MCF 10A (cell line): ENCODE measurements at regions of chr4 and their contacts with region 1.

Region 1: DNA sequence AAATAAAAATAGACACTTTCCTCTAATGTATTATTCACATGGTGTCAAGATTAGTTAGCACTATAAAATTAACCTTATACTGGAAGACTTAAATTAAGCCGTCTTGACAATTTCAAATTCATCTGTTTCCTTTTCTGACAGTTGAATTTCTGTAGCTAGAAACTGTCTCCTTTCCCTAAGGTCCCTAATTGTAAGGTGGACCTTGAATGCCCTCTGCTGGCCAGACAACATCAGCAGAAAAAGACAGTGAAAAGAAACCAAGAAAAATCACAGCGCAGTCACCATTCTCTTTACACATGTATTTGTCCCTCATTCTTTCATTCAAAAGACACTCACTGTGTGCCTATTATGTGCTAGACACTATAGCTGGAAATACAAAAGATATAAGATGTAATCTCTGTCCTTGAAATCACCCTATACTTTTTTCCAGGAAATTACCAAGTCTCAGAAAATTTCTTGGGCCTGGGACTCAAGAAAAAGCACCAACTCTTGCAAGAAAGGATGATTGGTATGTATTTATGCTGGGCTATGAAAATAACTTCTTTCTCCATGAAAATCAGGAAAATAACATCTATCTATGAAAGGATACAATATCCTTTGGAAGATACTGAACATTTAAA is 32.7 kb upstream of the AMBN start:
- DNase-seq: peak; percentile 74
- H3K4me3 Mint-ChIP-seq: no peak overlapping the region
- H3K27ac Mint-ChIP-seq: no peak overlapping the region
- H3K4me1 Mint-ChIP-seq: peaks cover 9% of the 10 kb centered on the region
- H3K27me3 Mint-ChIP-seq: no peaks in the 10 kb centered on the region
- CTCF ChIP-seq: peak; percentile 79

Region 2: DNA sequence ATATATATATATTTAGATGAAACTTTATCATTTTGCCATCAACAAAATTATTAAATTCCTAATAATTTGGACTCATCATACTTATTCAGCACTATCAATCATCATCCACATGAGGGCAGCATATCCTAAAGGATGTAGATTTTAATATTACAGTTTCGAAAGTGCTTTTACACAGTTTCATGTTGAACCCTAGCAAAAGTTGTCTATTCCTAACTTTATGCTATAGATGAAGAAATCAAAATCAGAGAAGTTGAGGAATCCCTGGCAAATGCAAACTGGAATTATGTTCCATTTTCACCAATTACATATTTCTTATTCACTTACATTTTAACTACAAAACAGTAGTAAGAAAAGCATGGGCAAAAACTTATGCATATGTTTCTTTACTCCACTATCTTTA is 869.7 kb before region 1 on chr4:
- CTCF ChIA-PET with region 1: interaction called, 3 read pairs
- POLR2A ChIA-PET with region 1: no interaction called
- intact Hi-C with region 1: loop called (anchors 2 kb)
- DNase-seq: peak; percentile 65
- H3K4me3 Mint-ChIP-seq: no peak overlapping the region
- H3K27ac Mint-ChIP-seq: no peak overlapping the region
- H3K4me1 Mint-ChIP-seq: no peaks in the 10 kb centered on the region
- H3K27me3 Mint-ChIP-seq: no peaks in the 10 kb centered on the region
- CTCF ChIP-seq: peak; percentile 45

Region 3: GRCh38 chr4:69896530-69897116 is 662.7 kb before region 1 on chr4:
- CTCF ChIA-PET with region 1: interaction called, 15 read pairs
- POLR2A ChIA-PET with region 1: no interaction called
- intact Hi-C with region 1: loop called (anchors 2 kb)
- DNase-seq: peak; percentile 27
- H3K4me3 Mint-ChIP-seq: no peak overlapping the region
- H3K27ac Mint-ChIP-seq: no peak overlapping the region
- H3K4me1 Mint-ChIP-seq: no peaks in the 10 kb centered on the region
- H3K27me3 Mint-ChIP-seq: peaks cover 79% of the 10 kb centered on the region
- CTCF ChIP-seq: peak; percentile 58

Region 4: GRCh38 chr4:69991016-69991415 is 568.3 kb before region 1 on chr4:
- CTCF ChIA-PET with region 1: no interaction called
- POLR2A ChIA-PET with region 1: no interaction called
- intact Hi-C with region 1: no loop called
- DNase-seq: no peak
- H3K4me3 Mint-ChIP-seq: no peak overlapping the region
- H3K27ac Mint-ChIP-seq: no peak overlapping the region
- H3K4me1 Mint-ChIP-seq: no peaks in the 10 kb centered on the region
- H3K27me3 Mint-ChIP-seq: peaks cover 43% of the 10 kb centered on the region
- CTCF ChIP-seq: no peak

Region 5: GRCh38 chr4:70183168-70183939 is 376.0 kb before region 1 on chr4:
- CTCF ChIA-PET with region 1: interaction called, 10 read pairs
- POLR2A ChIA-PET with region 1: interaction called, 3 read pairs
- intact Hi-C with region 1: loop called (anchors 2 kb)
- DNase-seq: peak; percentile 62
- H3K4me3 Mint-ChIP-seq: no peak overlapping the region
- H3K27ac Mint-ChIP-seq: no peak overlapping the region
- H3K4me1 Mint-ChIP-seq: no peaks in the 10 kb centered on the region
- H3K27me3 Mint-ChIP-seq: peaks cover 90% of the 10 kb centered on the region
- CTCF ChIP-seq: peak; percentile 54

Region 6: DNA sequence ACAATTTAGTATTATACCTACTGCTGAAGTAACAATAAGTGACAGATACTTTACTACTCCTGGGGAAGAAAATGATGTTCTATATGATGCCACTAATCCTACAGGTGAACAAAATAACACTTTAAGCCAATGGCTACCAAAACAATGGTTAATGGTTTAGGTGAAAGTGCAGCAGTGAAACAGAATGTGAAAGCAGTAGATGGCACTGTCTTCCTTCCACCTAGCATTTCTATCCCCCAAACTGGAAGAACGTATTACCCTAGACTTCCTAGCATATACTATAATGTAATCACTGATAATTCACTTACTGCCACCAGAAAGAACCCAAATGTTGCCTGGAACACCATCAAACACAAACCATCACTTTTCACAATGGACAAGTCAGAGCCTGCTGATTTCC is 243.4 kb before region 1 on chr4:
- CTCF ChIA-PET with region 1: no interaction called
- POLR2A ChIA-PET with region 1: no interaction called
- intact Hi-C with region 1: loop called (anchors 5 kb)
- DNase-seq: peak; percentile 5
- H3K4me3 Mint-ChIP-seq: no peak overlapping the region
- H3K27ac Mint-ChIP-seq: no peak overlapping the region
- H3K4me1 Mint-ChIP-seq: no peaks in the 10 kb centered on the region
- H3K27me3 Mint-ChIP-seq: no peaks in the 10 kb centered on the region
- CTCF ChIP-seq: no peak

Region 7: GRCh38 chr4:70505151-70505748 is 54.1 kb before region 1 on chr4:
- CTCF ChIA-PET with region 1: interaction called, 8 read pairs
- POLR2A ChIA-PET with region 1: no interaction called
- intact Hi-C with region 1: loop called (anchors 1 kb)
- DNase-seq: peak; percentile 64
- H3K4me3 Mint-ChIP-seq: no peak overlapping the region
- H3K27ac Mint-ChIP-seq: no peak overlapping the region
- H3K4me1 Mint-ChIP-seq: no peaks in the 10 kb centered on the region
- H3K27me3 Mint-ChIP-seq: peaks cover 11% of the 10 kb centered on the region
- CTCF ChIP-seq: peak; percentile 89

Region 8: DNA sequence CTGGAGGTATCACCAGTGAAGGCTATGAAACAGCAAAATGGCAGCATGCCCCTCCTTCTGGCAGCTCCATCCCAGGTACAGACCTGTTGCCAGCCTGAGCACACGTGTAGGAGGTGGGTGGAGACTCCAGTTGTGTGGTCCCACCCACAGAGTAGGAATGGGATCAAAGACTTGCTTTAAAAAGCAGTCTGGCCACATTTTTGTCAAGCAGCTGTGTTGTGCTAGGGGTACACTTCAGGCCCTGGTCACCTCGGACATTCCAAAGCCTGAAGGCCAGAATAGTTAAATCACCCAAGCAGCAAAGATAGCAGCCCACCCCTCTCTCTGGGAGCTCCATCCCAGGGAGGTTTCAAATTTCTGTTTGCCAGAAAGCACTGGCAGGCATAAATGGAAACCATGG is 12.5 kb after region 1 on chr4:
- CTCF ChIA-PET with region 1: interaction called, 20 read pairs
- POLR2A ChIA-PET with region 1: no interaction called
- intact Hi-C with region 1: no loop called
- DNase-seq: no peak
- H3K4me3 Mint-ChIP-seq: no peak overlapping the region
- H3K27ac Mint-ChIP-seq: no peak overlapping the region
- H3K4me1 Mint-ChIP-seq: no peaks in the 10 kb centered on the region
- H3K27me3 Mint-ChIP-seq: no peaks in the 10 kb centered on the region
- CTCF ChIP-seq: no peak